Activated naive CD4-positive, alpha-beta T cell treated with anti-CD3 and anti-CD28 coated beads for 36 hours (primary cell): ENCODE measurements at regions of chr19 and their contacts with region 1.

Region 1: DNA sequence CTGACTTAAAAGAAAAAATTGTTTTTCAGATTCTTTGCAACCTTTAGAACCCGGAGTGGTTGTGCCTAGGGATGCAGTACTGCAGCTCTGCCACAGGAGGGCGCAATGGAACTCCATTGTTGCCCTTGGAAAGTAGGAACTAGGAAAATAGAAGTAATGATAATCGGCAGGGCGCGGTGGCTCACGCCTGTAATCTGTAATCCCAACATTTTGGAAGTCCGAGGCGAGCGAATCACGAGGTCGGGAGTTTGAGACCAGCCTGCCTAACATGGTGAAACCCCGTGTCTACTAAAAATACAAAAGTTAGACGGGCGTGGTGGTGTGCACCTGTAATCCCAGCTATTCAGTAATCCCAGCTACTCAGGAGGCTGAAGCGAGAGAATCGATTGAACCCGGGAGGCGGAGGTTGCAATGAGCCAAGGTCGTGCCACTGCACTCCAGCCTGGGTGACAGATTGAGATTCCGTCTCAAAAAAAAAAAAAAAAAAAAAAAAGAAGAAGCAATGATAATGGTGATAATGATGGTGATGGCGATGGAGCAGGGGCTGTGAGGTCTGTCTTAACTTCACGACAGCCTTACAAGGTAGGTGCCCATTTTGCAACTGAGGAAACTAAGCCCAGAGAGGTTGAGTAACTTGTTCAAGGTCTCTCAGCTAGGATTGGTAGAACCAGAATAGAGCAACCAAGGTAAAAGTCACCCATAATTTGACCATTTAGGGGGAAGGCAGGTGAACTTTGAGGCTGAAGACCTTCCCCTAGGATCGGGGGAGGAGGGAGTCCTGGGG is 5.5 kb upstream of the ADAMTS10 start:
- DNase-seq: peak; percentile 83
- H3K4me3 Mint-ChIP-seq: no peak overlapping the region
- H3K27ac Mint-ChIP-seq: peak overlapping the region; percentile 57
- H3K4me1 Mint-ChIP-seq: peaks cover 16% of the 10 kb centered on the region
- H3K27me3 Mint-ChIP-seq: no peaks in the 10 kb centered on the region

Region 2: GRCh38 chr19:8592231-8593009 is 23.6 kb before region 1 on chr19:
- CTCF ChIA-PET with region 1: interaction called, 29 read pairs
- intact Hi-C with region 1: no loop called
- DNase-seq: peak; percentile 98
- H3K4me3 Mint-ChIP-seq: peak overlapping the region; percentile 78
- H3K27ac Mint-ChIP-seq: no peak overlapping the region
- H3K4me1 Mint-ChIP-seq: peaks cover 10% of the 10 kb centered on the region
- H3K27me3 Mint-ChIP-seq: no peaks in the 10 kb centered on the region